Gastrocnemius medialis (tissue), 4 donors: ENCODE measurements at regions of chr15 and their contacts with region 1.

Region 1: GRCh38 chr15:76791511-76791910 is 113.6 kb downstream of the SCAPER start:
- DNase-seq: no peak
- ATAC-seq: no peak
- H3K4me3 ChIP-seq: no peak overlapping the region
- H3K27ac ChIP-seq: no peak overlapping the region
- H3K4me1 ChIP-seq: no peaks in the 10 kb centered on the region
- H3K27me3 ChIP-seq: no peaks in the 10 kb centered on the region
- CTCF ChIP-seq: no peak
- POLR2A ChIP-seq: no peak

Region 2: DNA sequence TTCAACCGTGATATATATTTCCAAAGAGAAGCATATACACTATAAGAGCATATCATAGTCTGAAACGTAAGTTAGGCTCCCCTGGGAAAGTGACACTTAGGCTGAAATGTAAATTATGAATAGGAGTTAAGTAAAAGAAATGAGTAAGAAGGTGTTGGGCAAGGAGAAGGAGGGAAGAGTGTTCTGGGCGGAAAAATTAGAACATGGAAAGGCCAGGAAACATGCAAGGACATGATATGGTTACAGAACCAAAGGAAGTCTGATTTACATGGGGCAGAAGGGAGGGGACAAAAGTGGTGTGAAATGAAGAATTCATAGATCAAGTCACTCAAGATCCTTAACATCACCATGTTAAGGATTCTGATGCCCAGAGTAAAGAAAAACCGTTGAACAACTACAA is 38.4 kb after region 1 on chr15:
- in situ Hi-C with region 1: no loop called
- intact Hi-C with region 1: loop called (anchors 2 kb)
- DNase-seq: no peak
- ATAC-seq: no peak
- H3K4me3 ChIP-seq: no peak overlapping the region
- H3K27ac ChIP-seq: no peak overlapping the region
- H3K4me1 ChIP-seq: no peaks in the 10 kb centered on the region
- H3K27me3 ChIP-seq: no peaks in the 10 kb centered on the region
- CTCF ChIP-seq: no peak
- POLR2A ChIP-seq: no peak